Cardiac septum (tissue), 1 donor: ENCODE measurements at regions of chr10 and their contacts with region 1.

Region 1: GRCh38 chr10:105758209-105758998 is 1117.3 kb downstream of the SORCS3 start:
- DNase-seq: no peak

Region 2: DNA sequence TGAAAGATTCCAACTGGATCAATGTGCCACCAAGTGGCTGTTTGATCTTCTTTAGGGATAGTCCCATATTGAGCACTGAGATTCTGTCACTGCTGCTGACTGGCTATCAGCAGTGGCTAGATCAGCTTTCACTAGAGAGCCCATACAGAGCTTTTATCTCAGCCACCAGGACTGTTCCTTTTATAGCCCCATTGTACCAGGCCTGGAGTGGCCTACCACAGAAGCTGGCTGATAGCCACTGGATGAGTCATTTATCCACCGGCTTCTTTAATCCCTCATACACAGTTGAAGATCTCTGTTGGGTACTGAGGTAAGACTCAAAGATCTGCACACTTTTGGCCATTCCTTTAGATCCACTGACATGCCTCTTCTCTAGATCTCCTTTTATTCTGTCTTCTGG is 16.2 kb before region 1 on chr10:
- intact Hi-C with region 1: loop called (anchors 2 kb)
- DNase-seq: no peak